HepG2 (cell line): ENCODE measurements at regions of chr10 and their contacts with region 1.

Region 1: GRCh38 chr10:66627156-66627555 is 298.7 kb upstream of the LRRTM3 start:
- DNase-seq: peak; percentile 34
- ATAC-seq: peak; percentile 92
- H3K4me3 ChIP-seq: no peak overlapping the region
- H3K27ac ChIP-seq: no peak overlapping the region
- H3K4me1 ChIP-seq: no peaks in the 10 kb centered on the region
- H3K27me3 ChIP-seq: no peaks in the 10 kb centered on the region
- CTCF ChIP-seq: peak; percentile 58
- EP300 ChIP-seq: no peak
- POLR2A ChIP-seq: no peak
- RAD21 ChIP-seq: no peak

Region 2: DNA sequence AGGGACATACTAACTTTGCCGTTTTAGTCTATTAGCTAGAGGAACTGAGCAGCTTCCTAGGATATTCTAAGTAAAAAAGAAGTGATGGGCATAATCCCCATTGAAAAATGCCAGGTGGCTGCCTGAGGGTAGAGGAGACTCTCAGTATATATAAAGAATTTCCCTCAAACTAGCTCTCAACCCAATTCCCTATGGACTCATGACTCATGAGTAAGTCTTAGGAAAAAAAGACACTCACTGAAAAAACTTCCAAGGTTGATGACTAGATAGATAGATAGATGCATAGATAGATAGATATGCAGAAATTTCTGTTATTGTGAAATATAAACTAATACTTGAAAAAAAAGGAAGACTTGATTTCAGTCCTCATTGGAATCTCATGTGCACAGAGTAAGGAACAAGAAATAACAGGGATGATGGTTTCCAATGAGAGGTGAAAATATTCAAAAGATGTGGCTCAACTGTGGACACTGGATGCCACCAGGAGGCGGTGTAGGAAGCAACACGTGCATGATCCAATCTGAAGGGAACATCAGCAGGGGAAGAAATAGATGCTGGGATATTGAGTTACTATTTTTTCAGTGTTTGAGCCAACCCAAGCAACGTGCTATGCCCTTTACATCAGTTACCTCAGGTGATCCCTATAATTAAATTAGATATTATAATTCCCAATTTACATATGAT is 412.3 kb before region 1 on chr10:
- CTCF ChIA-PET with region 1: no interaction called
- POLR2A ChIA-PET with region 1: no interaction called
- in situ Hi-C with region 1: no loop called
- intact Hi-C with region 1: loop called (anchors 1 kb)
- DNase-seq: peak; percentile 4
- ATAC-seq: no peak
- H3K4me3 ChIP-seq: no peak overlapping the region
- H3K27ac ChIP-seq: no peak overlapping the region
- H3K4me1 ChIP-seq: no peaks in the 10 kb centered on the region
- H3K27me3 ChIP-seq: no peaks in the 10 kb centered on the region
- CTCF ChIP-seq: peak; percentile 53
- EP300 ChIP-seq: no peak
- POLR2A ChIP-seq: no peak
- RAD21 ChIP-seq: no peak

Region 3: DNA sequence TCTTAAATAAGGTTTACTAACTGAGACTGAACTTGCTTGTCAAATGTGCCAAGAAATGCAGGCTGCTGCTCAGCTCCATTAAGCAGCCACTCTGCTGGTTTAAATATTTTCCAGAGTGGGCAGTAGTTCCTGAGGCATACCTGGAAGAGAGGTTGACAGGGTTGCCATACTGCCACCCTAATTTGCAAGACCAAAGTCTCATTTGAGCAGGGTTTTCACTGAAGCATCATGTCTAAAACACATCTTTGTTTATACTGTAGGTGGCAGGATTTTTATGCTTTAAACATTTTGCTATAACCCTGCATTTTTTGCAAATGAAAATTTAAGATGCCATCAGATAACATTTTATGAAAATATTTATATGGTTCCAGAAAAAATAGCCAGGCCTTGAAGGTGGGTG is 319.3 kb before region 1 on chr10:
- CTCF ChIA-PET with region 1: no interaction called
- POLR2A ChIA-PET with region 1: no interaction called
- in situ Hi-C with region 1: no loop called
- intact Hi-C with region 1: loop called (anchors 10 kb)
- DNase-seq: no peak
- ATAC-seq: no peak
- H3K4me3 ChIP-seq: no peak overlapping the region
- H3K27ac ChIP-seq: no peak overlapping the region
- H3K4me1 ChIP-seq: no peaks in the 10 kb centered on the region
- H3K27me3 ChIP-seq: no peaks in the 10 kb centered on the region
- CTCF ChIP-seq: no peak
- EP300 ChIP-seq: no peak
- POLR2A ChIP-seq: no peak
- RAD21 ChIP-seq: no peak